ENCODE measurements at regions of chr1 and their contacts with region 1.

Region 1: DNA sequence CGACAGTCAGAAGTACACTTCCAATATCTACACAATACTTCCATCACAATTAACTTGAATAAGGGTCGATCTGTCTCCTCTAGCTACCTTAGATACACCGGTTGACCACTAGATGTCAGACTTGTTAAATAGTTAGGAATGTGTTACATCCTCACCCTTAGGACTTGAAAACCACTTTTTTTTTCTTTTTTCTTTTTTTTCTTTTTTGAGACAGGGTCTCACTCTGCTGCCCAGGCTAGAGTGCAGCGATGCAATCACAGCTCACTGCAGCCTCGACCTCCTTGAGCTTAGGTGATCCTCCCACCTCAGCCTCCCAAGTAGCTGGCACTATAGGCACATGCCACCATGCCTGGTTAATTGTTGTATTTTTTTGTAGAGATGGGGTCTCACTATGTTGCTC is 120.4 kb upstream of the GREM2 start:
- DNase-seq: peak; percentile 86
- H3K4me3 Mint-ChIP-seq: no peak overlapping the region
- H3K27ac Mint-ChIP-seq: no peak overlapping the region
- H3K4me1 Mint-ChIP-seq: peaks cover 6% of the 10 kb centered on the region
- H3K27me3 Mint-ChIP-seq: no peaks in the 10 kb centered on the region
- CTCF ChIP-seq: peak; percentile 92

Region 2: GRCh38 chr1:240350910-240351331 is 381.5 kb before region 1 on chr1:
- CTCF ChIA-PET with region 1: no interaction called
- POLR2A ChIA-PET with region 1: no interaction called
- intact Hi-C with region 1: no loop called
- DNase-seq: no peak
- H3K4me3 Mint-ChIP-seq: no peak overlapping the region
- H3K27ac Mint-ChIP-seq: no peak overlapping the region
- H3K4me1 Mint-ChIP-seq: peaks cover 11% of the 10 kb centered on the region
- H3K27me3 Mint-ChIP-seq: no peaks in the 10 kb centered on the region
- CTCF ChIP-seq: no peak

Region 3: DNA sequence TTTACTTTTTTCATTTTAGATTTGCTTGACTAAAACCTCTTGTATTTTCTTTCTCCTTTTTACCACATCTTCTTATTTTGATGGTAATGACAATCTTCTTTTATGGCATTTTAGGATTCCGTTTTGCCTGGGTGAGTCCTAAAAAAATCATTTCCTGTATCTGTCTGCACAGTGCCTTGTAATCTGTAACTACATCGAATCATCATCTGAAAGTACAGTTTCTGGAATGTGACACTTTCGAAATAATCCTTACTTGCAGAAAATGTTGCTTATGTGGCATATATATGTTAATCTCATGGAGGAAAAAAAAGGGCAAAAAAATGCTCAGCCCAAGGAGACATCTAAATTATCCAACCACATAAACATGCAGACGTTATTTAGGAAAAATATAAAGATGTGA is 149.4 kb before region 1 on chr1:
- CTCF ChIA-PET with region 1: no interaction called
- POLR2A ChIA-PET with region 1: no interaction called
- intact Hi-C with region 1: no loop called
- DNase-seq: no peak
- H3K4me3 Mint-ChIP-seq: no peak overlapping the region
- H3K27ac Mint-ChIP-seq: no peak overlapping the region
- H3K4me1 Mint-ChIP-seq: peaks cover 5% of the 10 kb centered on the region
- H3K27me3 Mint-ChIP-seq: no peaks in the 10 kb centered on the region
- CTCF ChIP-seq: no peak

Region 4: DNA sequence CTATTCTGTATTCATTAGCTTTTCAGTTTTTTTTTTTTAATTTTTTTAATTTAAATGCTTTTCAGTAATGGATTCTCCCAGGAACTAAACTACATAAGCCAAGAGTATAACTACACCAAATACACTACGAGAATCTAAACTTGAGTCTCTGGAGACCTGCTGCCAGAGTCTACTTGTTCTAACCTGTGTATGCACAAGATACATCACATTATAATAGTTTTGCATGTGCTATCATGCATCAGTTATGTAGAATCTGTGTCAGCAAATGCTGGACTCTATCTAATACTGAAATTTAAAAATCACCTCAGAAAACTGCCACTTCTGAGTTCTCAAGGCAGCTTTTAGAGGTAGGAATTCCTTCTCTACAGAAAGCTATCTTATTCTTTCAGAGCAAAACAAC is 25.9 kb after region 1 on chr1:
- CTCF ChIA-PET with region 1: interaction called, 30 read pairs
- POLR2A ChIA-PET with region 1: interaction called, 3 read pairs
- intact Hi-C with region 1: no loop called
- DNase-seq: no peak
- H3K4me3 Mint-ChIP-seq: no peak overlapping the region
- H3K27ac Mint-ChIP-seq: no peak overlapping the region
- H3K4me1 Mint-ChIP-seq: peaks cover 8% of the 10 kb centered on the region
- H3K27me3 Mint-ChIP-seq: no peaks in the 10 kb centered on the region
- CTCF ChIP-seq: no peak

Region 5: DNA sequence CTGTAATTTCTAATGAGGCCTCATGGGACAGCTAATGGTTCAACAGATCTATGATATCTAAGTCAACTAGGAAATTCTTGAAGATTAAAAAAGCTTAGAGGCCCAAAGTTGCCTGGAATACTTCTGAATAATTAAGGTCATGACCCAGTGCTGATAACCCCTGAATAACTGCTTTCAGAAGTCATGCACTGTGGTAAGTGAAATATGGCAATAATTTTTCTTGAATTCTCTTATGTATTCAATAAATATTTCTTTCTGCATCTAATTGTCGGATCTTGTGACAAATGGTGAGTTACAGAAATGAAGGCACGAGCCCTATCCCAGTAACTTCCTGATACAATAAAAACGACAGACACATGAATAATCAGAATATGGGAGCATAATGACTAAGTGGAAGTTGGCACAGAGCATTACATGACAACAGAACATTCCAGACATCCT is 98.8 kb after region 1 on chr1:
- CTCF ChIA-PET with region 1: interaction called, 28 read pairs
- POLR2A ChIA-PET with region 1: no interaction called
- intact Hi-C with region 1: loop called (anchors 5 kb)
- DNase-seq: peak; percentile 83
- H3K4me3 Mint-ChIP-seq: no peak overlapping the region
- H3K27ac Mint-ChIP-seq: peak overlapping the region; percentile 86
- H3K4me1 Mint-ChIP-seq: peaks cover 11% of the 10 kb centered on the region
- H3K27me3 Mint-ChIP-seq: no peaks in the 10 kb centered on the region
- CTCF ChIP-seq: no peak

Region 6: GRCh38 chr1:240946926-240947325 is 214.5 kb after region 1 on chr1:
- CTCF ChIA-PET with region 1: interaction called, 137 read pairs
- POLR2A ChIA-PET with region 1: interaction called, 3 read pairs
- intact Hi-C with region 1: loop called (anchors 1 kb)
- DNase-seq: peak; percentile 85
- H3K4me3 Mint-ChIP-seq: no peak overlapping the region
- H3K27ac Mint-ChIP-seq: no peak overlapping the region
- H3K4me1 Mint-ChIP-seq: no peaks in the 10 kb centered on the region
- H3K27me3 Mint-ChIP-seq: no peaks in the 10 kb centered on the region
- CTCF ChIP-seq: peak; percentile 81

Region 7: DNA sequence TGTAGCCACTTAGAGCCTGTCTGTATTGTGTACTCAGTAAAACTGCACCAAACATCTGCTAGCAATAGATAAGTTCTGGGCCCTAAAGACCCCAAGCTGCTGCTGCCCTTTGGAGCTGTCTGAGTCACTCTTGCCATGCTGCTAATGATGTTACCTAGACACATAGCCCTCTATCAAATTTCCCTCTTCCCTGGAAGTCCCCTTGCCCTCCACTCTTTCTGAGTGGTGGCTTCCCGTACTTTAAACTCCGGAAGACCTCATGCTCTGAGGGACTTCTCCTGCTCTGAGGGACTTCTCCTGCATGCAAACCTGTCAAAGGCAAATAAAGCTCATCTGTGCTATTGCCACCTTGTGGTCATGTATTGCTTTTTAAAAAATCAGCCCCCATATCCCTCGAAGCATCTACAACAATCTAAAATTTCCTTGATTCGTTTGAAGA is 753.2 kb after region 1 on chr1:
- CTCF ChIA-PET with region 1: interaction called, 59 read pairs
- POLR2A ChIA-PET with region 1: interaction called, 4 read pairs
- intact Hi-C with region 1: loop called (anchors 5 kb)
- DNase-seq: peak; percentile 64
- H3K4me3 Mint-ChIP-seq: no peak overlapping the region
- H3K27ac Mint-ChIP-seq: no peak overlapping the region
- H3K4me1 Mint-ChIP-seq: peaks cover 26% of the 10 kb centered on the region
- H3K27me3 Mint-ChIP-seq: no peaks in the 10 kb centered on the region
- CTCF ChIP-seq: peak; percentile 63

Region 8: GRCh38 chr1:241736387-241736786 is 1004.0 kb after region 1 on chr1:
- CTCF ChIA-PET with region 1: no interaction called
- POLR2A ChIA-PET with region 1: no interaction called
- intact Hi-C with region 1: no loop called
- DNase-seq: no peak
- H3K4me3 Mint-ChIP-seq: no peak overlapping the region
- H3K27ac Mint-ChIP-seq: no peak overlapping the region
- H3K4me1 Mint-ChIP-seq: no peaks in the 10 kb centered on the region
- H3K27me3 Mint-ChIP-seq: no peaks in the 10 kb centered on the region
- CTCF ChIP-seq: no peak